OCI-LY7 (cell line): ENCODE measurements at regions of chrX and their contacts with region 1.

Region 1: GRCh38 chrX:51336584-51336983 is 4.0 kb downstream of the NUDT10 start:
- DNase-seq: peak; percentile 68
- H3K4me3 ChIP-seq: no peak overlapping the region
- H3K27ac ChIP-seq: no peak overlapping the region
- H3K4me1 ChIP-seq: no peaks in the 10 kb centered on the region
- CTCF ChIP-seq: peak; percentile 76

Region 2: DNA sequence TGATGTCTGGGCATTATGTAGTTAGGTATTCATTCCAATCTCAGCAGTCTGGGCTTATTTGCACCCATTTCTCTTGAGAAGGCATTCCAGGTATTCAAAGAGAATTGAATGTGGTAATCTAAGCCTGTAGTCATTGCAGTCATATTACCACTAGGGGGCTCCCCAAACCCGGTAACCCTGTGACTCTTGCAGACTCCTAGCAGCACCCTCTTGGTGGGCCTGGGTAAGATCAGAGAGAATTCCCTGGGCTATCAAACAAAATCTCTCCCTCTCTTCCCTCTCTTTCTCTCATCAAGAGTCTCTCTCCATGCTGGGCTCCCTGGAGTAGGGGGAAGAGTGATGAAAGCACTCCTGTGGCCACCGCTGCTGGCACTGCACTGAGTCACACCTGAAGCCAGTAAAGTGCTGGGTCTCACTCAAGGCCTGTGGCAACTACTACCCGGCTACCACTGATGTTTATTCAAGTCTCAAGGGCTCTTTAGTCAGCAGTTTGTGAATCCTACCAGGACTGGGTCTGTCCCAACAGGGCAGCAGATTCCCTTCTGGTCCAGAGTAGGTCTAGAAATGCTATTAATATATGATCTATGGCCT is 191.6 kb before region 1 on chrX:
- CTCF ChIA-PET with region 1: no interaction called
- POLR2A ChIA-PET with region 1: no interaction called
- intact Hi-C with region 1: loop called (anchors 10 kb)
- DNase-seq: peak; percentile 57
- H3K4me3 ChIP-seq: no peak overlapping the region
- H3K27ac ChIP-seq: no peak overlapping the region
- H3K4me1 ChIP-seq: no peaks in the 10 kb centered on the region
- CTCF ChIP-seq: peak; percentile 79

Region 3: DNA sequence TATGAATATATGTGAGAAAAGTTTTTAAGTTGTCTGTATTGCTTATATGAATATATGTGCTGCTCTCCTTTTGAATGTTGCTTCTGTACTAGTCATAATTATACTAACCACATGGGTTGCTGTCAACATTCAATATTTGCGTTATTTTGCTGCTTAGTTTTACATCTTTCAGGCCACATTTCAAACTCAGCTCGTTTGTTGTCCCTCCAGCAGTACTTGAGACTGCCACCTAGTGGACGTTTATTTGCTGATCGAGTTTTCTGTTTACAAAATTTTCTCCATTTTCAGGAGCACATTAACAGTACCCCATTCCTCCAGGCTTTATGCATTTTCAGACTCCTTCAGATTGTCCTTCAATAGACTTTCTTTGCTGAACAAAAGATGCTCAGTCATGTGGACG is 84.0 kb after region 1 on chrX:
- CTCF ChIA-PET with region 1: interaction called, 3 read pairs
- POLR2A ChIA-PET with region 1: interaction called, 3 read pairs
- intact Hi-C with region 1: loop called (anchors 1 kb)
- DNase-seq: peak; percentile 73
- H3K4me3 ChIP-seq: no peak overlapping the region
- H3K27ac ChIP-seq: no peak overlapping the region
- H3K4me1 ChIP-seq: peaks cover 39% of the 10 kb centered on the region
- CTCF ChIP-seq: peak; percentile 81

Region 4: GRCh38 chrX:51461053-51462044 is 124.8 kb after region 1 on chrX:
- CTCF ChIA-PET with region 1: no interaction called
- POLR2A ChIA-PET with region 1: interaction called, 3 read pairs
- intact Hi-C with region 1: loop called (anchors 1 kb)
- DNase-seq: peak; percentile 47
- H3K4me3 ChIP-seq: no peak overlapping the region
- H3K27ac ChIP-seq: no peak overlapping the region
- H3K4me1 ChIP-seq: peaks cover 5% of the 10 kb centered on the region
- CTCF ChIP-seq: peak; percentile 77